ENCODE measurements at regions of chr2 and their contacts with region 1.

Region 1: GRCh38 chr2:169933124-169933711 is 106.0 kb downstream of the UBR3 start:
- DNase-seq: peak; percentile 54
- H3K4me3 ChIP-seq: no peak overlapping the region
- H3K27ac ChIP-seq: no peak overlapping the region
- H3K4me1 ChIP-seq: no peaks in the 10 kb centered on the region
- H3K27me3 ChIP-seq: no peaks in the 10 kb centered on the region
- CTCF ChIP-seq: peak; percentile 45 to 57
- POLR2A ChIP-seq: no peak

Region 2: DNA sequence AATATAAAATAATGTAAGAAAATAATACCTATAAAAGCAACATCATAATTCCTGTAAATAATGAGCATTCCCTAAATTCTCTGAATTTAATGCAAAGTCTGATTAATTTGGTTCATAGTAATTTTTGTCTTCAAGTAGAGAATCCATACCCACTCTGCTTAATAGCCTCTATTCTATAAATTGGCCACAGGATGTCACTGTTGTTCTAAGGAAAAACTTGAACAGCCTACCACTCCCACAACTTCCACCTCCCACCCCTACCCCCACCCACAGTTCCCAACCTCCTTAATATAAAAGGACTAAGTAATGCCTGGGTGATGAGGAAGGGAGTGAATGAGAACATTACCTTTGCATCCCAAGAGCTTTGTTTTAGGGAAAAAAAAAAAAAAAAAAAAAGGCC is 481.1 kb before region 1 on chr2:
- CTCF ChIA-PET with region 1: interaction called, 31 read pairs
- POLR2A ChIA-PET with region 1: no interaction called
- dilution Hi-C with region 1: no loop called
- intact Hi-C with region 1: loop called (anchors 1 kb)
- DNase-seq: peak; percentile 39
- H3K4me3 ChIP-seq: no peak overlapping the region
- H3K27ac ChIP-seq: no peak overlapping the region
- H3K4me1 ChIP-seq: no peaks in the 10 kb centered on the region
- H3K27me3 ChIP-seq: no peaks in the 10 kb centered on the region
- CTCF ChIP-seq: peak in 1 of 2 donors; percentile 22
- POLR2A ChIP-seq: no peak

Region 3: DNA sequence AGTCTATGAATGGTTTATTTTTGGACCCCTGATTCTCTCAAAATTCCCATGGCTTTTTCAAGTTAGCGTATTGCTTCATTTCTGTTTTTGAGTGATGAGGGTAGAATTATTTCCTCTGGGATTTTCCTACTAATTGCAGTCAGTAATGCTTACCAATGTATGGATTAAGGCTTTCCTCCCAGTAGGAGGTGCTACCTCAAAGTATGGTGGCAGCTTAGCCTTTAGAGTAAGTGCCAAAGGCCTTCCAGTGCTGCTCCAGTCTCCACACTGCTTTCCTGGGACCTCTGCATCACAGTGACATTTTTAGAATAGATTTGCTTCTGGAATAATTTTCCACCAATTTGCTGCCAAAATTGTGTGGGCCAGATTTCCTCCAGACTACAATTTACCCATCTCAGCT is 150.7 kb before region 1 on chr2:
- CTCF ChIA-PET with region 1: no interaction called
- POLR2A ChIA-PET with region 1: no interaction called
- dilution Hi-C with region 1: no loop called
- intact Hi-C with region 1: no loop called
- DNase-seq: no peak
- H3K4me3 ChIP-seq: no peak overlapping the region
- H3K27ac ChIP-seq: no peak overlapping the region
- H3K4me1 ChIP-seq: no peaks in the 10 kb centered on the region
- H3K27me3 ChIP-seq: no peaks in the 10 kb centered on the region
- CTCF ChIP-seq: no peak
- POLR2A ChIP-seq: no peak

Region 4: GRCh38 chr2:169824373-169825333 is 108.6 kb before region 1 on chr2 and contains the start of gene METTL5:
- CTCF ChIA-PET with region 1: interaction called, 4 read pairs
- POLR2A ChIA-PET with region 1: no interaction called
- dilution Hi-C with region 1: no loop called
- intact Hi-C with region 1: loop called (anchors 1 kb)
- DNase-seq: peak; percentile 80
- H3K4me3 ChIP-seq: peak within 1 kb of the TSS; percentile 67 to 90 (median 85)
- H3K27ac ChIP-seq: peak within 1 kb of the TSS; percentile 44
- H3K4me1 ChIP-seq: peaks cover 21% of the 10 kb centered on the region
- H3K27me3 ChIP-seq: no peaks in the 10 kb centered on the region
- CTCF ChIP-seq: peak; percentile 88 to 95
- POLR2A ChIP-seq: peak; percentile 75
- total RNA-seq, gene METTL5: 50.4 and 52.0 TPM in 2 replicates

Region 5: DNA sequence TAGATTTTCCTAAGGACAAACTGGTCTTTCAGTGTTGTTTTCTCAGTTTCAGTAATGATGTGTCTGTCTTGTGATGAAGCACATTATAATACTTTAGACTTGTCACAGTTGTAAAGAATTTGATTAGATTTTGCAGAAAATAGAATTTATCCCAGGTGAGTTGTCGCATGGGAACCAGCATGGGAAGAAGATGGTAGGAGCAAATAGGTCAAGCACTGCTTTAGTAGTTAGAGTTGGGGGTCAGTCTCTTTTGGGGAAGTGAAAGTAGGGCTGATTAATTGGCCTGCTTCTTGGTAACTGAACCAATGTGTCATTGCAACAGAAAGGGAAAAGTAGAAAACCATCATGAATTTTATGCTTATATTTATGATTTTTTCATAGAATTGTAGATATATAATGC is 91.5 kb after region 1 on chr2:
- CTCF ChIA-PET with region 1: no interaction called
- POLR2A ChIA-PET with region 1: no interaction called
- dilution Hi-C with region 1: no loop called
- intact Hi-C with region 1: no loop called
- DNase-seq: no peak
- H3K4me3 ChIP-seq: no peak overlapping the region
- H3K27ac ChIP-seq: no peak overlapping the region
- H3K4me1 ChIP-seq: no peaks in the 10 kb centered on the region
- H3K27me3 ChIP-seq: no peaks in the 10 kb centered on the region
- CTCF ChIP-seq: no peak
- POLR2A ChIP-seq: no peak

Region 6: DNA sequence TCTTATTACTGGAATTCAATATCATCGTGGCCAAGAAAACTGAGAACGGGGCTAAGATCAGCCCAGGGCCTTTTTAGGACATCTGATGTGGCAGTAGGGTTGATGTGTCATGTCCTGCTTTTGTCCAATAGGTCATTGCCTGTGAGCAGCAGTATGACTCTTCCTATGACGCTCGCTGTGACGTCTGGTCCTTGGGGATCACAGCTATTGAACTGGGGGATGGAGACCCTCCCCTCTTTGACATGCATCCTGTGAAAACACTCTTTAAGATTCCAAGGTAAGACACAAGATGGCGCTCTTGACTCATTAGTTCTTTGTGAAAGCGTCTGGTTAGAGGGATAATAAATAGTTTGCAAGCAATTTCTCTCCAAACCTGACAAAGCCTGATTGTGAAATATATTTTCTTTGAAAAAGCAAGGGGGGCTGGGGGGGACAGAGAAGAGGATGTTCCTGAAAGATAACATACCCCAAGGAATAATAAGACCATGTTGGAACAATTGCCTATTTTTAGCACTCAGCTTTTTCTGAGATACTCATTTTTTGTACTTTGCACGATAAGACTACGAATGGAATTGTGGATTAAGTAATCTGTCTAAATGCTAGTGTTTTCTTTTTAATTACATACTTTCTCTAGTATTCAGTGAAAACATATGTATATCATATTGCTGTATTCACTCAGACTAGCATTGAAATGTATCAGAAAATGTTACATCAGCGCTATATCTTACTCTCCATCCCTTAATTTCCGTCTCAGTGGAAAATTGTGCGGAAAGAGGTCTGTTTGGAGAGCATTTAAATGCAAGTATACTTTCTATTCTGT is 302.9 kb after region 1 on chr2:
- CTCF ChIA-PET with region 1: interaction called, 6 read pairs
- POLR2A ChIA-PET with region 1: no interaction called
- dilution Hi-C with region 1: no loop called
- intact Hi-C with region 1: loop called (anchors 1 kb)
- DNase-seq: peak; percentile 72
- H3K4me3 ChIP-seq: no peak overlapping the region
- H3K27ac ChIP-seq: no peak overlapping the region
- H3K4me1 ChIP-seq: no peaks in the 10 kb centered on the region
- H3K27me3 ChIP-seq: peaks cover 11 to 27% of the 10 kb centered on the region in 2 experiments
- CTCF ChIP-seq: peak; percentile 38 to 45
- POLR2A ChIP-seq: no peak

Region 7: DNA sequence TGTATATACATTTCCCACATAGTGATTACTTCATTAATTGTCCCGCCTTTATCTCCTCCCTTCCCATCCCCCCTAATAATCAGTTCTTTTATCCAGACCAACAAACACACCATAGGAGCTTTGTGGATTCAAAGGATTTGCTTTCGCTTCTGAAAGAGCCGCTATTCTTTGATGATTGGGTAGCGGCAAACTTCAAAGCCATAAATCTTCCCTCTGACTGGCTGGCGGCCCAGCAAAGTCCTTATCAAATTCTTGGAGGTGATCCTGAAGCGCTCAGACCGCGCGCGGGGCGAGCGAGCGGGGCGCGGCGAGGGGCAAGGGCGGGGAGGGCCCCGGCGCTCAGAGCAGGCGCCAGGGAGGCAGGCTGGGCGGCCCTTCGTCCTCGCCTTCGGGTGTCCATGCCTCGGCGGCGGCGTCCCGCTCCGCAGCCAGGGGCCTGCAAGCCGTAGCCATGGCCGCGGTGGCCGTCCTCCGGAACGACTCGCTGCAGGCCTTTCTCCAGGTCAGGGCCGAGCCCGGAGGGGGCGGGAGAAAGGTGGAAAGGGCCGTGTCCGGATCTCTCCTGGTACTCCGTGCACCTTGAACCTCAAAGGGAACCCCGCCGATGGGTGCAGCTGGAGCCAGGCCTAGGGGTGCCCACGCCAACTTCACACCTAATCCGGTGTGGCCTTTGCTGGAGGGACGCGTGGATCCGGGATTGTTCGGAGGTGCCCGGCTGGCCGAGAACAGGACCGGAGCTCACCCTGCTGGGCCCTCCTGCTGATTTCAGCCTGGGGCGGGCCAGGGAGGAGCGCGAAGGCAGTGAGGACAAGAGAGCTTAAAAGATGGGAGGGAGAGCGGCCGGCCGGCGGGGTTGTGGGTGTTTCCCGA is 782.1 kb after region 1 on chr2 and contains the start of gene SP5:
- CTCF ChIA-PET with region 1: no interaction called
- POLR2A ChIA-PET with region 1: no interaction called
- dilution Hi-C with region 1: no loop called
- intact Hi-C with region 1: loop called (anchors 10 kb)
- DNase-seq: peak; percentile 49
- H3K4me3 ChIP-seq: peak within 1 kb of the TSS; percentile 17 to 63 (median 30)
- H3K27ac ChIP-seq: no peak within 1 kb of the TSS
- H3K4me1 ChIP-seq: peaks cover 19% of the 10 kb centered on the region
- H3K27me3 ChIP-seq: peaks cover 67 to 97% of the 10 kb centered on the region in 2 experiments
- CTCF ChIP-seq: no peak
- POLR2A ChIP-seq: no peak
- total RNA-seq, gene SP5: not detected in 2 replicates

Measured in endothelial cell of umbilical vein (primary cell).